T-cell (primary cell): ENCODE measurements at regions of chr12 and their contacts with region 1.

Region 1: GRCh38 chr12:51217968-51218606 is at the start of gene POU6F1:
- DNase-seq: peak; percentile 44 to 84 (median 64)
- ATAC-seq: peak; percentile 84 to 87 (median 85)
- H3K4me3 ChIP-seq: peak within 1 kb of the TSS; percentile 88 to 90
- H3K4me3 Mint-ChIP-seq: peak within 1 kb of the TSS; percentile 90 to 92 (median 91)
- H3K27ac ChIP-seq: peak within 1 kb of the TSS; percentile 91
- H3K27ac Mint-ChIP-seq: peak within 1 kb of the TSS; percentile 96 to 97
- H3K4me1 ChIP-seq: peaks cover 5 to 18% of the 10 kb centered on the region in 2 experiments
- H3K4me1 Mint-ChIP-seq: peaks cover 26 to 31% (median 28%) of the 10 kb centered on the region in 3 donors
- H3K27me3 ChIP-seq: no peaks in the 10 kb centered on the region
- H3K27me3 Mint-ChIP-seq: no peaks in the 10 kb centered on the region
- total RNA-seq, gene POU6F1: 29.4 to 61.9 (median 45.4) TPM

Region 2: GRCh38 chr12:50025187-50026059 is 1192.7 kb before region 1 on chr12 and contains the start of gene RACGAP1:
- CTCF ChIA-PET with region 1: no interaction called
- POLR2A ChIA-PET with region 1: interaction called in 1 of 2 experiments, 11 read pairs
- DNase-seq: peak; percentile 84 to 99 (median 96)
- ATAC-seq: peak; percentile 98 to 99 (median 99)
- H3K4me3 ChIP-seq: peak within 1 kb of the TSS; percentile 65 to 78
- H3K4me3 Mint-ChIP-seq: peak within 1 kb of the TSS; percentile 96 to 99 (median 98)
- H3K27ac ChIP-seq: peak within 1 kb of the TSS; percentile 52
- H3K27ac Mint-ChIP-seq: peak within 1 kb of the TSS; percentile 84 to 95
- H3K4me1 ChIP-seq: peaks cover 5 to 10% of the 10 kb centered on the region in 2 experiments
- H3K4me1 Mint-ChIP-seq: peaks cover 17 to 22% (median 20%) of the 10 kb centered on the region in 3 donors
- H3K27me3 ChIP-seq: peaks cover 0 to 4% of the 10 kb centered on the region in 2 experiments
- H3K27me3 Mint-ChIP-seq: peaks cover 0 to 1% of the 10 kb centered on the region in 2 donors
- total RNA-seq, gene RACGAP1: 5.5 to 14.8 (median 13.9) TPM

Region 3: DNA sequence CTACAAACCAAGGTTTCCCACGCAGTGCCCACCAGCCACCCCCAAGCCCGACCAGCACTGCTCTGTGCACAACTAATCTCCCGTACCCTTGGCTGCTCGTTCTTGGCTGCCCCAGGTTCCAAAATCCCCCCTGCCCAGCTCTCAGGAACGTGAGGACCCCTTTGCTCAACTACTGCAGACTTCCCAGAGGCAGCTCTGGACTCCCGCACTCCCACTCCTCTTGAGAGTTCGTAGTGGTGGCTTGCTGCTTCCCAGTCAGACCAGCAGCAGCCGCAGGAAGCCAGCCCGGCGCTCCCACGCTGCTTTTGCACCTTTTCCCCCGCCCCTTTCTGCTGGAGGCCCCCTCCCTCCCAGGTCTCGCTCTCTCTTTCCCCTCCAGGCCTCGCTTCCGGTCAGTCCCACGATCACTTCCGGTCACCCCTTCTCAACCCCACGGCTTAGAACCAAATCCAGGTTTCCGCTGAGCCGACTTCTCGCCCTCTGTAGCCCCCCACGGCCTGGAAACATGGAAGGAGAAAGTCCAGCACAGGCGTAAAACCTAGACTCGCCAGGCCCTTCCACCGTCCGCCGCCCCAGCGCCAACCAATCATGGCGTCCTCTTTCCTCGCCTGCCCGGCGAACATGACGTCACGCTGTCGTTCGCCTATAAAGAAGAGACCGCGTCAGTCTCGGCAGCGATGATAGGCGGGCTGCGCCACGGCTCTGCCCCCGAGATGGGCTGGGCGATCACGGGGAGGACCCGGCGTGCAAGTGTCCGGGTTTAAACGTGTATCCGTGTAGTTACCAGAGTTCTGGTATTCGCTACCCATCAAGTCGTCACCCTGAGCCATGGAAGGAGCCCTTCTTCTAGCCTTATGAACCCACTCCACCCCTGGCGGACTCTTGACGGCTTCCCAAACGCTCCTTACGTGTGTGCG is 45.3 kb before region 1 on chr12 and contains the start of gene TFCP2:
- CTCF ChIA-PET with region 1: interaction called in 1 of 2 experiments, 15 read pairs
- POLR2A ChIA-PET with region 1: interaction called, 3 to 7 read pairs
- DNase-seq: peak; percentile 78 to 97 (median 93)
- ATAC-seq: peak; percentile 99
- H3K4me3 ChIP-seq: peak within 1 kb of the TSS; percentile 79 to 84
- H3K4me3 Mint-ChIP-seq: peak within 1 kb of the TSS in 2 of 3 donors; percentile 69 to 80
- H3K27ac ChIP-seq: peak within 1 kb of the TSS; percentile 91
- H3K27ac Mint-ChIP-seq: peak within 1 kb of the TSS; percentile 78 to 81
- H3K4me1 ChIP-seq: peaks cover 15 to 33% of the 10 kb centered on the region in 2 experiments
- H3K4me1 Mint-ChIP-seq: peaks cover 7 to 14% (median 14%) of the 10 kb centered on the region in 3 donors
- H3K27me3 ChIP-seq: no peaks in the 10 kb centered on the region
- H3K27me3 Mint-ChIP-seq: no peaks in the 10 kb centered on the region
- total RNA-seq, gene TFCP2: 26.8 to 31.8 (median 30.0) TPM

Region 4: DNA sequence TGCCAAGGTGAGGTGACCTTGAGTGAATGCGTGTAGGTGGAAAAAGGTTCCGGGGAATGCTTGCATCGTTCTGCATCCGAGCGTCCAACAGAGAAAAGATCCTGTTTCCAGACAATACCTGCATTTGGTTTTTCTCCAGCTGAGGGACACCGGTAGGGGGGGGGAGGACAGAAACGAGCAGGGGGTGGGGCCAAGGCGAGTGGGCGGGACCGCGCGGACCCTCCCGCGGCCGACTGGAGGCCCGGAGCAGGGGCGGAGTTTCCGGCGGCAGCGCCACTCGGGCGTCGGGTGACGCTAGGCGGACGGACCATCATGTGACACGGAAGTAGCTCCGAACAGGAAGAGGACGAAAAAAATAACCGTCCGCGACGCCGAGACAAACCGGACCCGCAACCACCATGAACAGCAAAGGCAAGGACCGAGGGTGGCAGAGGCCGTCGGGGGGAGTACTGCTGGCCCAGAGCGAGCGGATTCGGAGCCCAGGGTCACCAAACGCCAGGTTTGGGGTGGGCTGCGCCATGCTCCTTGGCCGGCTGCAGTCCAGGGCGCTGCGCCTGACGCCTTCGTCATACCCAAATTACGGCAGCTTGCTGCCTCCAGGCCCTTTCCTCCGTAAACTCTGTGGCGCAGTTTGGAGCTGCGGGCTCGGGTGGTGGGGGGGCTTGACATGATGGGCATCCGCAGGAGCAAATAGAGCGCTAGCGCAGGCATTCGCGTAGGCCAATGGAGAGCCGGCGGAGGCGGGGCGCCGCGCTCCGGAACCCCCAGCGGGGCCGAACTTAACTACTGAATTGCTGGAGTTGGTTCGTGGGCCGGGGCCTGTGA is 20.6 kb after region 1 on chr12 and contains the start of gene DAZAP2:
- CTCF ChIA-PET with region 1: interaction called, 4 to 27 read pairs
- POLR2A ChIA-PET with region 1: interaction called, 3 to 22 read pairs
- DNase-seq: peak; percentile 86 to 98 (median 92)
- ATAC-seq: peak; percentile 89 to 94 (median 92)
- H3K4me3 ChIP-seq: peak within 1 kb of the TSS; percentile 98 to 99
- H3K4me3 Mint-ChIP-seq: peak within 1 kb of the TSS; percentile 96 to 97 (median 96)
- H3K27ac ChIP-seq: peak within 1 kb of the TSS; percentile 100
- H3K27ac Mint-ChIP-seq: peak within 1 kb of the TSS; percentile 99 to 100
- H3K4me1 ChIP-seq: peaks cover 13 to 41% of the 10 kb centered on the region in 2 experiments
- H3K4me1 Mint-ChIP-seq: peaks cover 42 to 46% (median 44%) of the 10 kb centered on the region in 3 donors
- H3K27me3 ChIP-seq: no peaks in the 10 kb centered on the region
- H3K27me3 Mint-ChIP-seq: no peaks in the 10 kb centered on the region
- total RNA-seq, gene DAZAP2: 275 to 308 (median 282) TPM

Region 5: GRCh38 chr12:51341259-51342007 is 123.3 kb after region 1 on chr12:
- CTCF ChIA-PET with region 1: interaction called in 1 of 2 experiments, 10 read pairs
- POLR2A ChIA-PET with region 1: no interaction called
- DNase-seq: peak; percentile 33 to 86 (median 63)
- ATAC-seq: peak; percentile 87 to 95 (median 89)
- H3K4me3 ChIP-seq: no peak overlapping the region
- H3K4me3 Mint-ChIP-seq: peak overlapping the region in 2 of 3 donors; percentile 49 to 67
- H3K27ac ChIP-seq: peak overlapping the region; percentile 33
- H3K27ac Mint-ChIP-seq: peak overlapping the region; percentile 68 to 85
- H3K4me1 ChIP-seq: peaks cover 3 to 15% of the 10 kb centered on the region in 2 experiments
- H3K4me1 Mint-ChIP-seq: peaks cover 7 to 28% (median 8%) of the 10 kb centered on the region in 3 donors
- H3K27me3 ChIP-seq: peaks cover 0 to 5% of the 10 kb centered on the region in 2 experiments
- H3K27me3 Mint-ChIP-seq: no peaks in the 10 kb centered on the region

Region 6: GRCh38 chr12:51391283-51392162 is 173.4 kb after region 1 on chr12 and contains the start of gene GALNT6:
- CTCF ChIA-PET with region 1: no interaction called
- POLR2A ChIA-PET with region 1: no interaction called
- DNase-seq: peak; percentile 29 to 83 (median 63)
- ATAC-seq: peak; percentile 70 to 78 (median 74)
- H3K4me3 ChIP-seq: peak within 1 kb of the TSS; percentile 80 to 87
- H3K4me3 Mint-ChIP-seq: peak within 1 kb of the TSS; percentile 87 to 94 (median 89)
- H3K27ac ChIP-seq: peak within 1 kb of the TSS; percentile 75
- H3K27ac Mint-ChIP-seq: peak within 1 kb of the TSS; percentile 71 to 96
- H3K4me1 ChIP-seq: peaks cover 49 to 67% of the 10 kb centered on the region in 2 experiments
- H3K4me1 Mint-ChIP-seq: peaks cover 76 to 86% (median 84%) of the 10 kb centered on the region in 3 donors
- H3K27me3 ChIP-seq: no peaks in the 10 kb centered on the region
- H3K27me3 Mint-ChIP-seq: no peaks in the 10 kb centered on the region
- total RNA-seq, gene GALNT6: 5.3 to 19.6 (median 7.9) TPM

Region 7: DNA sequence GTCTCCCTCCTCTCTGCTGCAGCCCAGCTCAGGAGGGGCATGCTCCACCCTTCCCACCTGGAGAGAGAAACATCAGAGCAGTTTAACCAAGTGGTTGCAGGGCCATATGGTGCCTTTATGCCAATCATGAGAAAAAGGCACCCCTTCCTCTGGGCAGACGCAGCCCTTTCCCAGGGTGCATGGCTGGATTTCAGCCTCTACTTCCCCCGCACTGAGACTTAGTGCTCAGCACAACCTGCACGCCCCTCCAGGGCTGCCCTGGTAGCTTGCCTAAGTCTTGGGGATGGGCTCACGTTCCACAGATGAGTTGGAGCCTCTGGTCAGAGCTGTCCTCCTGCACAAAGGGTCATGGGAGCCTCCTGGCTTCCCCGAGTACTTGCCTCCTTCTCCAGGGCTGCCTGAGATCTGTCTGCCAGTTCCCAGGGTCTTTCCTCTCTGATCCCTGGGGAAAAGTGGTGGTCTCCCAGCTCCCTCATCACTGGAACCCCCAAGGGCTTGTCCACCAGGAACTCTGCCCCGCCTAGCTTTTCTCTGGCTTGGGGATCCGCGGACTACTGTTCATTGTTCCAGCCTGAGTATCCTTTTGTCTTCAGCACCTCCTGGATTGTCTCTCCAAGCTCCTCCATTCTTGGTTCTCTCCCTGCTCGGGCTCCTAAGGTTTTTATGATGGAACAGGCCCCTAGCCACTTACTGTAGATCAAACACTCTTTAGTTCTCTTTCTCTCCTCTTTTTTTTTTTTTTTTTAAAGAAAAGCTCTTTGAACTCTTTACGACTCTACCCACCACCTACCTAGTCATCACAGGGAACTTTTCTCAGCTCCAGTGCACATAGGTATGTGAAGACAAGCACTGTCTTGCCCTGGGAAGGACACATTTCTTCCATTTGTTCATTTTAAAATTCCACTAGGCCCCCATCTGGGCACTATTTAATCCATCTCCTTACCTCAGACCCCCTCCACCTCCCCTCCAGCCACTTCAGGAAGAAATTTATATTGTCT is 1361.7 kb after region 1 on chr12:
- CTCF ChIA-PET with region 1: no interaction called
- POLR2A ChIA-PET with region 1: no interaction called
- DNase-seq: peak in 2 of 35 experiments; percentile 22 to 26
- ATAC-seq: peak in 1 of 4 experiments; percentile 48
- H3K4me3 ChIP-seq: no peak overlapping the region
- H3K4me3 Mint-ChIP-seq: no peak overlapping the region
- H3K27ac ChIP-seq: no peak overlapping the region
- H3K27ac Mint-ChIP-seq: peak overlapping the region; percentile 23 to 55
- H3K4me1 ChIP-seq: peaks cover 12 to 32% of the 10 kb centered on the region in 2 experiments
- H3K4me1 Mint-ChIP-seq: peaks cover 30 to 38% (median 38%) of the 10 kb centered on the region in 3 donors
- H3K27me3 ChIP-seq: peaks cover 0 to 14% of the 10 kb centered on the region in 2 experiments
- H3K27me3 Mint-ChIP-seq: peaks cover 0 to 3% of the 10 kb centered on the region in 2 donors